Mammary epithelial cell (primary cell): ENCODE measurements at regions of chr17 and their contacts with region 1.

Region 1: GRCh38 chr17:29617125-29617480 is 5.6 kb downstream of the CORO6 start:
- DNase-seq: no peak
- H3K4me3 ChIP-seq: no peak overlapping the region
- H3K27ac ChIP-seq: no peak overlapping the region
- H3K4me1 ChIP-seq: peaks cover 51% of the 10 kb centered on the region
- H3K27me3 ChIP-seq: no peaks in the 10 kb centered on the region
- CTCF ChIP-seq: peak; percentile 31 to 45

Region 2: GRCh38 chr17:29483503-29483902 is 133.6 kb before region 1 on chr17:
- CTCF ChIA-PET with region 1: no interaction called
- dilution Hi-C with region 1: no loop called
- in situ Hi-C with region 1: no loop called
- intact Hi-C with region 1: no loop called
- DNase-seq: no peak
- H3K4me3 ChIP-seq: no peak overlapping the region
- H3K27ac ChIP-seq: no peak overlapping the region
- H3K4me1 ChIP-seq: no peaks in the 10 kb centered on the region
- H3K27me3 ChIP-seq: no peaks in the 10 kb centered on the region
- CTCF ChIP-seq: no peak

Region 3: GRCh38 chr17:29589524-29590410 is 27.3 kb before region 1 on chr17 and contains the start of gene GIT1:
- CTCF ChIA-PET with region 1: interaction called, 5 read pairs
- dilution Hi-C with region 1: no loop called
- in situ Hi-C with region 1: no loop called
- intact Hi-C with region 1: loop called (anchors 1 kb)
- DNase-seq: peak; percentile 81
- H3K4me3 ChIP-seq: peak within 1 kb of the TSS; percentile 59 to 91 (median 75)
- H3K27ac ChIP-seq: peak within 1 kb of the TSS; percentile 39
- H3K4me1 ChIP-seq: peaks cover 74% of the 10 kb centered on the region
- H3K27me3 ChIP-seq: no peaks in the 10 kb centered on the region
- CTCF ChIP-seq: no peak
- total RNA-seq, gene GIT1: 41.8 to 83.4 TPM

Region 4: GRCh38 chr17:29777663-29778062 is 160.6 kb after region 1 on chr17:
- CTCF ChIA-PET with region 1: no interaction called
- dilution Hi-C with region 1: no loop called
- in situ Hi-C with region 1: no loop called
- intact Hi-C with region 1: loop called (anchors 1 kb)
- DNase-seq: no peak
- H3K4me3 ChIP-seq: no peak overlapping the region
- H3K27ac ChIP-seq: no peak overlapping the region
- H3K4me1 ChIP-seq: no peaks in the 10 kb centered on the region
- H3K27me3 ChIP-seq: no peaks in the 10 kb centered on the region
- CTCF ChIP-seq: no peak